ENCODE measurements at regions of chr5 and their contacts with region 1.

Region 1: DNA sequence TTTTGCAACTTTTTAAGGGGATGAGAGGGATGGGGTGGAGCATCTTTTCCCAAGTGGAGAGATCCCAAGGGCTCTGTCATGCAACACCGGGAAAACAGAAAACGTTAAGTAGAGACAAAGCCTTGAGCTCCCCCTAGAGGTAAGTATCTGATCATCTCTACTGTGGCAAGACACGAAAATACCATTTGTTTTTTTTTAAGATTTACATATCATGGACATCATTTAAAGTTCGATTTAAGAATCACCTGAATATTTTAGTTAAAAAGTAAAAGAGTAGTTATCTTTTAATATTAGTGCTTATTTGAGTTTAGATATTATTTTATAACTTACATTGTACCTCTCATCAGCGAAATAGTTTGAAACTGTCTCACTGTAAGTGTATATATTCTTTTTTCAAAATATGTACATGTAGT is 200.4 kb downstream of the LRRC70 start:
- DNase-seq: peak; percentile 70
- CTCF ChIP-seq: peak; percentile 53

Region 2: GRCh38 chr5:62457071-62457470 is 321.9 kb before region 1 on chr5:
- in situ Hi-C with region 1: loop called (anchors 10 kb)
- DNase-seq: no peak
- CTCF ChIP-seq: no peak

Region 3: DNA sequence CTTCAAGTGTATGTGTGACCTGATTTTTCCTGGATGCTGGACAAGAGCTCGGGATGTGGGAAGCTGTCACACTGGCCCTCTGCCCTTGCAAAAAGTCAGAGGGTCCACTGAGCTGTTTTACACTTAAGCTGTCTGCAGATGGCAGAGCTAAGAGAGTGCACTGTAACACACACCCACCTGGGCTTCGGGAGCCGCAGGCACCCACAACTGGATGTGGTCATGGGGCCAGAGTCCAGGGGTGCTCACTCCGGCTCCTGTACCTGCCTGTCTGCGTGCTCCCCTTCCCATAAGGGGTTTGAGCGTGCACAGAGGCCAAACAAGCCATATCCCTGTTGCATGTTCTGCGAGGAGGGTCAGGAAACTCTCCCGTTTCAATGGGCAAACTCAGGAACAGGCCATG is 117.9 kb before region 1 on chr5:
- in situ Hi-C with region 1: no loop called
- DNase-seq: no peak
- CTCF ChIP-seq: no peak

Measured in GM13976 (cell line).